SK-N-SH (cell line): ENCODE measurements at regions of chr16 and their contacts with region 1.

Region 1: GRCh38 chr16:84062734-84063640 is 20.4 kb upstream of the SLC38A8 start:
- DNase-seq: peak; percentile 86
- H3K4me3 ChIP-seq: peak overlapping the region in 1 of 2 experiments; percentile 44; a peak in 1 of 4 replicates
- H3K27ac ChIP-seq: no peak overlapping the region; a peak in 2 of 4 replicates
- H3K4me1 ChIP-seq: peaks cover 0 to 6% of the 10 kb centered on the region in 2 experiments; a peak in 2 of 4 replicates
- H3K27me3 ChIP-seq: no peaks in the 10 kb centered on the region
- CTCF ChIP-seq: peak; percentile 95
- EP300 ChIP-seq: no peak
- RAD21 ChIP-seq: peak; percentile 57

Region 2: DNA sequence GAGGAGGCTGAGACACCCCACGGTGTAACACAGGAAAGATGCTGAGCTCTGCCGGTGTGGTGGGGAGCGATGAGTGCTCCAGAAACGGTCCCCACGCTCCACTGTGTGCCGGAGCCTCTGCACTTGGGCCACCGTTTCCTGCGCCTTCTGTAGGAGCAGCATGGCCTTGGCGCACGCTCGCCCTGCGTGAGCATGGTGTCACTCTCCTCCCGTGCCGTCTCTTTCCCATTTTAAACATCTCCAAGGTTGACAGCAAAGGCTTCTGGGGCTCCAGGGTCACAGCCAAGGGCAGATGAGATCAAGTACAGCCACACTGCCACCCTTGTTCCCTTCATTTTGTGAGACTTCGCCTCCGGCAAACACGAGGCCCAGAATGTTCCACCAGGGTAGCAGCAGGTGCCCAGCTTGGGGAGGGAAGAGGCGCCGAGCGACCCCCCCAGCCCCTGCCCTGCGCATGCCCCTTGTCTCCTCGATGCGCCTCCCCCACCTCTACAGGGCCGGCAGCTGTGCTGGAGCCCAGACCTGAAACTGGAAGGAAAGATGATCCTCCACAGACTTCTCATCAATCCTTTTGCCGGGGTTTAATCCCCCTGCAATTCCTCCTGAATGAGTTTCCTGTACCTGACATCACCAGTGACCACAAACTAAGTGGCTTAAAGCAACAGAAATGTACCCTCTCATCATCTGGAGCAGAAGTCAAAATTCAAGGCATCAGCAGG is 129.9 kb before region 1 on chr16:
- CTCF ChIA-PET with region 1: interaction called, 27 read pairs
- POLR2A ChIA-PET with region 1: no interaction called
- DNase-seq: no peak
- H3K4me3 ChIP-seq: no peak overlapping the region
- H3K27ac ChIP-seq: no peak overlapping the region
- H3K4me1 ChIP-seq: peaks cover 0 to 11% of the 10 kb centered on the region in 2 experiments; a peak in 1 of 4 replicates
- H3K27me3 ChIP-seq: no peaks in the 10 kb centered on the region
- CTCF ChIP-seq: no peak
- EP300 ChIP-seq: no peak
- RAD21 ChIP-seq: no peak

Region 3: GRCh38 chr16:83967806-83968305 is 95.1 kb before region 1 on chr16 and contains the start of gene NECAB2:
- CTCF ChIA-PET with region 1: interaction called, 470 read pairs
- POLR2A ChIA-PET with region 1: no interaction called
- DNase-seq: peak; percentile 94
- H3K4me3 ChIP-seq: peak within 1 kb of the TSS in 1 of 2 experiments; percentile 32; a peak in 2 of 4 replicates
- H3K27ac ChIP-seq: no peak within 1 kb of the TSS
- H3K4me1 ChIP-seq: no peaks in the 10 kb centered on the region
- H3K27me3 ChIP-seq: no peaks in the 10 kb centered on the region
- CTCF ChIP-seq: peak; percentile 73
- EP300 ChIP-seq: no peak
- RAD21 ChIP-seq: peak; percentile 66
- polyA plus RNA-seq, gene NECAB2: 0.54 and 0.58 TPM in 2 replicates

Region 4: GRCh38 chr16:84084570-84085270 is 21.7 kb after region 1 on chr16:
- CTCF ChIA-PET with region 1: interaction called, 163 read pairs
- POLR2A ChIA-PET with region 1: no interaction called
- DNase-seq: peak; percentile 84
- H3K4me3 ChIP-seq: peak overlapping the region in 1 of 2 experiments; percentile 16; a peak in 1 of 4 replicates
- H3K27ac ChIP-seq: no peak overlapping the region
- H3K4me1 ChIP-seq: no peaks in the 10 kb centered on the region
- H3K27me3 ChIP-seq: no peaks in the 10 kb centered on the region
- CTCF ChIP-seq: peak; percentile 82
- EP300 ChIP-seq: no peak
- RAD21 ChIP-seq: peak; percentile 72

Region 5: DNA sequence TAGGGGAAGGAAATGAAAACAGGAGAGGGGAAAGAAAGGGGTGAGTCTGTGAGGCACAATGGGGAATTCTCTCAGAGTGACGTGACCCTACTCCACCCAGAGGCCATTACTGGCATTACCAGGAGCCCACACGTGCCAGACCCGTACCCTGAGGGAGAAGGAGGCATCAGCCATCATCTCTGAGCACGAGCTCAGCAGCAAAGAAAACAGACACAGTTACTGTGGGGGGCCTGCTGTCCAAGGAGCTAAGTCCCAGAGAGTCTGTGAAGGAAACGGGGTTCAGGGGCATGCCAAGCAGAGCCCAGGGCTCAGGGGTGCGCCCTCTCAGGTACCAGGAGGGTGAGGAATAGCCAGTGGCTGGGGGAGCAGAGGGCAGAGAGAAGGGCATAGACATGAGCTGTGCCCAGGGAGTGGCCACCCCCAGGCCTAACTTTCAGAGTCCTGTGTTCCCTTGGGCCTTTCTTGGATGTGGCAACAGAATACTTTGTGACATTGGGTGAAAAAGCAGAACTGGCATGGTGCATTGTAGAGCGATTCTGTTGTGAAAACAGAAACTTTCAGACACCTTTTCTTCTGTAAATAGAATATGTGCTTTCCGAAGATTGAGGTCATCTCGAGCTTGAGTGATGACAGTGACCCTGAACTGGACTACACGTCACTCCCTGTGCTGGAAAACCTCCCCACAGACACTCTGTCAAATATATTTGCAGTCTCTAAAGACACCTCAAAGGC is 112.5 kb after region 1 on chr16:
- CTCF ChIA-PET with region 1: interaction called, 20 read pairs
- POLR2A ChIA-PET with region 1: no interaction called
- DNase-seq: peak; percentile 91
- H3K4me3 ChIP-seq: no peak overlapping the region
- H3K27ac ChIP-seq: no peak overlapping the region
- H3K4me1 ChIP-seq: peaks cover 0 to 7% of the 10 kb centered on the region in 2 experiments; a peak in 1 of 4 replicates
- H3K27me3 ChIP-seq: no peaks in the 10 kb centered on the region
- CTCF ChIP-seq: peak; percentile 78
- EP300 ChIP-seq: no peak
- RAD21 ChIP-seq: peak; percentile 91

Region 6: DNA sequence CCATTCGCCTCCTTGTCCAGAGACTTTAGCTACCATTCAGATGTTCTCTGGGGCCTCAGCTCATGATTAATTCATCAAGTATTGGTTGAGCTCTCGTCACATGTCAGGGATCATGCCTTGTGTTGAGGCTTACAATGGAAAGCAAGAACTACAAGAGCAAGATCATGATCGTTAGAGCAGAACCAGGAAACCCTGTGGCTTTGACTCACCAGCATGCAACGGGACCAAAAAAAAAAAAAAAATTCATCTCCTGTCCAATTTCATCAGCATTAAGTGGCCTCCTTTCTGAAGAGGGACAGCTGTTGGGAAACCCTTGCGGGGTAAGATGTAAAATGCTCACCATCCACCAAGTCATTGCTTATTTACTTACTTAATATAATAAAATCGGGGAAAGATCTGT is 624.7 kb after region 1 on chr16:
- CTCF ChIA-PET with region 1: no interaction called
- POLR2A ChIA-PET with region 1: no interaction called
- DNase-seq: no peak
- H3K4me3 ChIP-seq: no peak overlapping the region
- H3K27ac ChIP-seq: peak overlapping the region in 1 of 2 experiments; percentile 50; a peak in 2 of 4 replicates
- H3K4me1 ChIP-seq: no peaks in the 10 kb centered on the region; a peak in 1 of 4 replicates
- H3K27me3 ChIP-seq: no peaks in the 10 kb centered on the region
- CTCF ChIP-seq: no peak
- EP300 ChIP-seq: no peak
- RAD21 ChIP-seq: no peak